Activated T-helper 2 cell treated with anti-CD3 and anti-CD28 coated beads, Interferon-gamma antibody, Interleukin-2, Interleukin-4, amounts not matched to agents 10 μg/mL and 5 μg/mL and 100 μg/mL, durations not matched to agents 14 hours and 24 hours and 36 hours (primary cell): ENCODE measurements at regions of chr7 and their contacts with region 1.

Region 1: DNA sequence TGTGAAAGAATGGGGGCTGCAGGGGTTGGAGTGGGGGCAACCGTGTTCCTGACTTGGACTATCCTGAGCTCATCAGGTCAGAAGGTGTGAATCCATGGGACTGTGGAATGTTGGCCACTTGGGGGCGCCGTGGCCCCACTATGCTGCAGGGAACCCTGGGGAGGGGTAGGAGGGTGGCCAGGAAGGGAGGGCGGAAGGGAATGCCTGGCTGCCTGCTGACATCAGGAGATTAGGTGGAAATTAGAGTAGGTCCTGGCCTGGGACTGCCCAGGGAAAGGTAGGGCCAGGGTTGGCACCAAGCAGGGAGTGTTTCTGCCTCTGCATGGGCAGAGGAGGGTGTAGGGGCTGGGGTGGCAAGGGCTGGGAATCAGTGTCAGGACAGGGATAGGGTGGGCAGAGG is 65.8 kb upstream of the PRSS58 start:
- DNase-seq: no peak
- H3K4me3 Mint-ChIP-seq: no peak overlapping the region
- H3K27ac Mint-ChIP-seq: no peak overlapping the region
- H3K4me1 Mint-ChIP-seq: peaks cover 4% of the 10 kb centered on the region
- H3K27me3 Mint-ChIP-seq: peaks cover 18% of the 10 kb centered on the region

Region 2: GRCh38 chr7:142796608-142797385 is 473.1 kb after region 1 on chr7:
- intact Hi-C with region 1: loop called (anchors 2 kb)
- DNase-seq: no peak
- H3K4me3 Mint-ChIP-seq: peak overlapping the region; percentile 95
- H3K27ac Mint-ChIP-seq: peak overlapping the region; percentile 99
- H3K4me1 Mint-ChIP-seq: peaks cover 64% of the 10 kb centered on the region
- H3K27me3 Mint-ChIP-seq: no peaks in the 10 kb centered on the region